IMR-90 (cell line): ENCODE measurements at regions of chr15 and their contacts with region 1.

Region 1: DNA sequence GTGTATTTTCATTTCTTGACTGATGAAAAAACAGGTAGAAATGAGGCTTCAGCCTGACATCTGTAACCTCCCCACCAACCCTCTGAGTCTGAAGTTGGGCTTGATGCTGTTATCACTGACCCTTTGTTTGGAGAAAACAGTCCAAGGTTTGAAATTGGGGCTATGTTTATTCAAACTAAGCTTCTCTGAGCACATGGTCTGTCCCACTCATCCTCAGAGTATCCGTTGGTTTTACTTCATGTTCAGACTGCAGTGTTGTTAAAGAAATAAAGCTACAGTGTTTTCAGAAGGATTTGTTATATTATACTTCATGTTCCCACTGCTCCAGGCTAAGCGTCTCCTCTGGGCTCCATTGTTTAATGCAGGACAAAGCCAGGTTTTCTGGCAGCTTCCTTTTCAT is 6.0 kb downstream of the MAPKBP1 start:
- DNase-seq: peak; percentile 80
- ATAC-seq: peak; percentile 85
- H3K4me3 ChIP-seq: no peak overlapping the region
- H3K27ac ChIP-seq: peak overlapping the region; percentile 18; the same call in 1 of the 2 replicates
- H3K4me1 ChIP-seq: peaks cover 15% of the 10 kb centered on the region
- H3K27me3 ChIP-seq: no peaks in the 10 kb centered on the region
- CTCF ChIP-seq: no peak
- POLR2A ChIP-seq: no peak
- RAD21 ChIP-seq: no peak

Region 2: DNA sequence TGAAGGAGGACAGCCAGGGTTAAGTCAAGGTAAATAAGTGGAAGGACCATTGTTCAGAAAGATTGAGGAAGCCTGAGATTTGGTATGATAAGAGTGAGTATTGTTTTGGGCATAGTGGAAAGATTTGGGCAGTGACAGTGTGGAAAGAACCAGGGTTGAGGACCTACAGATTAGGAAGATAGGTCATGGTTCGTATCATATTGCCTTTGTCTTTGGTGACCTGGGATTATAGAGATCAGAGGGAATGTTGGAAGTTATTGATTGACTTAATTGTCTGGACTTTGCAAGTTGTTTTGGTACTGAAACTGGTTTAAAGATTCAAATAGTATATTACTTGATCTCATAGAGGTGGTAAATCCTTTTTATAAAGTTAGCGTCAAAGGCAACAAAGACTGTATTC is 143.2 kb before region 1 on chr15:
- CTCF ChIA-PET with region 1: no interaction called
- POLR2A ChIA-PET with region 1: interaction called, 12 read pairs
- dilution Hi-C with region 1: no loop called
- in situ Hi-C with region 1: no loop called
- intact Hi-C with region 1: no loop called
- DNase-seq: no peak
- ATAC-seq: no peak
- H3K4me3 ChIP-seq: no peak overlapping the region
- H3K27ac ChIP-seq: no peak overlapping the region
- H3K4me1 ChIP-seq: no peaks in the 10 kb centered on the region
- H3K27me3 ChIP-seq: no peaks in the 10 kb centered on the region
- CTCF ChIP-seq: no peak
- POLR2A ChIP-seq: no peak
- RAD21 ChIP-seq: no peak